ENCODE measurements at regions of chr20 and their contacts with region 1.

Region 1: DNA sequence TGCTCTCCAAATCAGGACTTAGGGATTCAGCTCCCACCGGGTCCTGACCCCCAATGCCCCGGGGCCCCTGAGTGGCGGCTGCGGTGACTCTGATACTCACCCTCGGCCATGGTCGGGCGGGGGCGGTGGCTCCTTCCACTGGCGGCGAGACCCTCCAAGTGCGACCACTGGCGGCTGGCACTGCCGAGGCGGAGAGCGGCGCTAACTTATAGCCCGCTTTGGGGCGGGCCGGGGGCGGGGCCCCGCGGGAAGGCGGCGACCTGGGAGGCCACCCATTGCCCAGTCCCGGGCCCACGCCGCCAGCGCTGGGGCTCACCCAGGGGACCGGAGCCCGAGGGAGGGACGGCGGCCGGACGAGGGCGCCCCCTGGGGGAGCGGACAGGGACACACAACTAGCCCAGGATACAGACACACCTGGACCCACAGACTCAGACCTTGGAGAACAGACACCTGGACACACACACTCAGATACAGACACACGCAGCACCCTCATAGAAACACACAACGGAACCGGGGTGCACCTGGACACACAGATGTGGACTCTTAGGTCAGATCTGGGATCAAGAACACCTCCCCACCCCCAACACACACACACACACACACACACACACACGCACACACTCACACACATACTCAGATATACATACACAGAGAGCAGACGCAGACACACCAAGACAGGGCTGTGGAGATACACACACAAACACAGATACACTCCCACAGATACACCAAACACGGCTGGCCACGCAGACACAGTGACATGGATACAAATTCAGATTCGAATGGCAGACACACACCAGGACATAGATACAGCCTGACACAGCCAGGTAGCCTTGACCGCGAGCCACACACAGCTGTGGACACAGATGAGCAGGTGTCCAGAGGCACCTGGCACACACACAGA is at the start of gene TGM2:
- DNase-seq: peak; percentile 90 to 96 (median 94)
- ATAC-seq: peak; percentile 96
- H3K4me3 ChIP-seq: peak within 1 kb of the TSS; percentile 54
- H3K27ac ChIP-seq: peak within 1 kb of the TSS; percentile 61
- H3K4me1 ChIP-seq: peaks cover 42 to 48% of the 10 kb centered on the region in 2 experiments; a peak in 4 of 5 replicates
- H3K27me3 ChIP-seq: no peaks in the 10 kb centered on the region
- CTCF ChIP-seq: peak; percentile 88 to 92 (median 91)
- EP300 ChIP-seq: no peak
- POLR2A ChIP-seq: no peak; the same call in 1 of the 2 replicates
- RAD21 ChIP-seq: peak; percentile 97 to 98
- polyA plus RNA-seq, gene TGM2: 5.5 TPM

Region 2: DNA sequence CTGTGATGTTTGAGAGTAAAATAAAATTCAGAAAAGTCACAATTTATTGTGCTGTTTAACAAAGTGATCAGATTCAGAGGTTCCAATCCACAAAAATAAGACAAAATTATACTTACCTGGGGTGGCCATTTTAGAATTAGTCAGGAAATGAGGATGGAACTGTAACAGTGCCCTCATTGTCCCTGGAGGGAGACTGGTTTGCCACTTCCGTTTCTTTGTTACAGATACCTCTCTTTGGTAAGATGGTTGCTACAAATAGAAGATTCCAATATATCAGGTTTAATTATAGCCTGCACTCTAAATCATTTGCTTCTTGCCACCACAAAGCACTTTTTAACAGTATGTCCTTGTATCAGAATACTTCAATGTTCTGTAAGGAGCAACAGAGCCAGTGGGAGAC is 375.9 kb before region 1 on chr20:
- CTCF ChIA-PET with region 1: no interaction called
- POLR2A ChIA-PET with region 1: no interaction called
- in situ Hi-C with region 1: no loop called
- intact Hi-C with region 1: no loop called
- DNase-seq: no peak
- ATAC-seq: no peak
- H3K4me3 ChIP-seq: no peak overlapping the region
- H3K27ac ChIP-seq: no peak overlapping the region
- H3K4me1 ChIP-seq: no peaks in the 10 kb centered on the region
- H3K27me3 ChIP-seq: no peaks in the 10 kb centered on the region
- CTCF ChIP-seq: no peak
- EP300 ChIP-seq: no peak
- POLR2A ChIP-seq: no peak
- RAD21 ChIP-seq: no peak

Region 3: DNA sequence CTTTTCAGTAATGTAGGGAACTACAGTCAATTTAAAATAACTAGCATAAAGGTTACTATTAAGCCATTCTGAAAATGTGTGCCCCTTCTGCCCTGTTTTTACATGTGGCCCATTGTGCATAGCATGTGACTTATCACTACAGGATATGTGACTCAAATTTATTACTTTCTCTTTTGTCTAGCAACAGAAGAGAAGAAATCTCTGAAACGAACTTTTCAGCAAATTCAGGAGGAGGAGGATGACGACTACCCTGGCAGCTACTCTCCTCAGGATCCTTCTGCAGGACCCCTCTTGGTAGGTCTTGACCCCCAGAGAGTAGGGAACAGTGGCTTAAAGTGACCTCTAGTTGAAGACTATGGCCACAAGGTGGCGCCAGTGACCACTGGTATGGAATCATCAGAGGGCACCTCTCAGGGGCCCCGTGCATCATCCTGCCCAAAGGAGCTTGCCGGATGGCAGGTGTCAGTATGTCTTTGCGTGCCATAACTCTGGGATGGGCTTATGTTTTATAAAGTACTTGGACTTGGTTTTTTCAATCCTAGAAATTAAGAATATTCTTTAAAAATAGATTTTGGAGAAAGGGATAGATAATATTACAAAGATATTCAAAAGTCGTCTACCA is 107.9 kb before region 1 on chr20:
- CTCF ChIA-PET with region 1: interaction called, 30 read pairs
- POLR2A ChIA-PET with region 1: no interaction called
- in situ Hi-C with region 1: no loop called
- intact Hi-C with region 1: loop called (anchors 1 kb)
- DNase-seq: peak; percentile 78 to 88 (median 80)
- ATAC-seq: peak; percentile 99
- H3K4me3 ChIP-seq: no peak overlapping the region
- H3K27ac ChIP-seq: no peak overlapping the region
- H3K4me1 ChIP-seq: no peaks in the 10 kb centered on the region
- H3K27me3 ChIP-seq: no peaks in the 10 kb centered on the region
- CTCF ChIP-seq: peak; percentile 76 to 90 (median 83)
- EP300 ChIP-seq: no peak
- POLR2A ChIP-seq: no peak
- RAD21 ChIP-seq: peak; percentile 82 to 90

Region 4: DNA sequence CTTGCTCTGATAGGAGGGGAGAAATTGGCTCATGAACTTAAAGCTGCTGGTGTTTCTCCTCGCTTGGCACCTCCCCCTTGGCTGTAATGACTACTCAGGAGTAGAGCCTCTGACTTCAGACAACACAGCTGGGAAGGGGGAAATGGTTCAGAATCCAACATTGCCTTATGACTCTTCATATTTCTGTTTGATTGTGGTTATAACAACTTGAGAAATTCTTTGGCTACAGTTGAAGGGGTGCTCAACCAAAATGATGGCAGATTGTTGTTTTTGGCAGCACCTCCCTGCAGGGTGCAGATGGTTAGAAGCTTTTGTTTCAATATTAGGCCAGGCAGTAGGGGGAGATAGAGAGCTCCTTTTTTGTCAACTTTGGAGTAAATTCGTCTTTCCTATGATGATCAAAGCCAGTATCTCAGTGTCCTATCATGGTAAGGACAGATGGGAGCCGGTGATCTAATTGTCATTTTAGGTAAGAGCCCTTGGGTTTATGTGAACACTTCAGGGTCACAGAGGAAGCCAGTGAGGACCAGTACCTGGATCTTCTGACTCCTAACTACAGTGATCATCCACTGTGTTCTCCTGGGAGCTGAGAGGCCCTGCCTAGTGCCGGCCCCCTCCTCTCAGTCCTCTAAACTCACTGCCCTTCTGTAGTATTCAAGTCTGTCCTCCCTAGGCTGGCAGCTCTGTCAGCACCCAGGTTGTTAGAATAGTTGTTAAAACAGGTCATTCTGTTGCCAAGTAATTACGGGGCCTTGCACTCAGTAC is 91.8 kb before region 1 on chr20:
- CTCF ChIA-PET with region 1: interaction called, 15 read pairs
- POLR2A ChIA-PET with region 1: interaction called, 6 read pairs
- in situ Hi-C with region 1: loop called (anchors 10 kb)
- intact Hi-C with region 1: loop called (anchors 1 kb)
- DNase-seq: peak; percentile 60 to 76 (median 62)
- ATAC-seq: peak; percentile 93
- H3K4me3 ChIP-seq: no peak overlapping the region
- H3K27ac ChIP-seq: no peak overlapping the region
- H3K4me1 ChIP-seq: peaks cover 0 to 14% of the 10 kb centered on the region in 2 experiments; a peak in 2 of 5 replicates
- H3K27me3 ChIP-seq: no peaks in the 10 kb centered on the region
- CTCF ChIP-seq: peak; percentile 77 to 83 (median 83)
- EP300 ChIP-seq: no peak
- POLR2A ChIP-seq: no peak
- RAD21 ChIP-seq: peak; percentile 69 to 84

Region 5: GRCh38 chr20:38113401-38114325 is 51.7 kb before region 1 on chr20:
- CTCF ChIA-PET with region 1: no interaction called
- POLR2A ChIA-PET with region 1: interaction called, 5 read pairs
- in situ Hi-C with region 1: no loop called
- intact Hi-C with region 1: loop called (anchors 1 kb)
- DNase-seq: peak; percentile 80 to 96 (median 84)
- ATAC-seq: peak; percentile 96
- H3K4me3 ChIP-seq: no peak overlapping the region
- H3K27ac ChIP-seq: peak overlapping the region; percentile 59
- H3K4me1 ChIP-seq: peaks cover 15 to 36% of the 10 kb centered on the region in 2 experiments
- H3K27me3 ChIP-seq: no peaks in the 10 kb centered on the region
- CTCF ChIP-seq: peak; percentile 86 to 90 (median 88)
- EP300 ChIP-seq: peak; percentile 75
- POLR2A ChIP-seq: 0 out of 2 replicates have a peak, but pooled peaks have one; percentile 27
- RAD21 ChIP-seq: peak; percentile 89 to 95

Region 6: DNA sequence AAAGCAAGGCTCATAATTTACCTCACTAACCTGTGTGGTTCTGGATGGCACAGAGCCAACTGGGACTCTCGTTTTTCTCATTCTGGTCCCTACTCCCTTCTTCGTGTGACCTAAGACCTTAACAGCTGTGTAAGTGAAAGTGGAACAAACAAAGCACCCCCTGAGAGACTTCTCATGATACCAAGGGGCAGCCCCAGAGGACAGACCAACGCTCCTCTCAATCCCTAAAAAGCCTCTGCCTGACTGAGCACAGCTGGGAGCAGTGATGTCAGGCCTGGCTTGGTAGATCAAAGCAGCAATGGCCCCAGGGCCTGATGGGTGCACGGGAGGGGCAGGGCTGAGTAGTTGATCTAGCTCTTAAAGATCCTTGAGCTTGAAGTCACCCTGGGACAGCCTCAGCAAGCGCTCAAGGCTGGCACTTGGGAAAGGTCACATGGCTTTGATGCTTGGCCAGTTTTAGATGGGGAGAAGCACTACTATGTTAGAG is 15.9 kb after region 1 on chr20:
- CTCF ChIA-PET with region 1: no interaction called
- POLR2A ChIA-PET with region 1: no interaction called
- in situ Hi-C with region 1: no loop called
- intact Hi-C with region 1: no loop called
- DNase-seq: no peak
- ATAC-seq: peak; percentile 70
- H3K4me3 ChIP-seq: no peak overlapping the region
- H3K27ac ChIP-seq: no peak overlapping the region
- H3K4me1 ChIP-seq: no peaks in the 10 kb centered on the region
- H3K27me3 ChIP-seq: peaks cover 43 to 57% of the 10 kb centered on the region in 2 experiments; a peak in 4 of 5 replicates
- CTCF ChIP-seq: no peak
- EP300 ChIP-seq: no peak
- POLR2A ChIP-seq: no peak
- RAD21 ChIP-seq: no peak

Region 7: GRCh38 chr20:38418509-38419204 is 253.3 kb after region 1 on chr20:
- CTCF ChIA-PET with region 1: no interaction called
- POLR2A ChIA-PET with region 1: no interaction called
- in situ Hi-C with region 1: no loop called
- intact Hi-C with region 1: no loop called
- DNase-seq: peak in 1 of 4 experiments; percentile 30
- ATAC-seq: peak; percentile 46
- H3K4me3 ChIP-seq: no peak overlapping the region
- H3K27ac ChIP-seq: peak overlapping the region; percentile 37; the same call in 2 of the 3 replicates
- H3K4me1 ChIP-seq: no peaks in the 10 kb centered on the region; a peak in 1 of 5 replicates
- H3K27me3 ChIP-seq: no peaks in the 10 kb centered on the region
- CTCF ChIP-seq: no peak
- EP300 ChIP-seq: no peak
- POLR2A ChIP-seq: peak; percentile 42
- RAD21 ChIP-seq: no peak